ENCODE measurements at regions of chr1 and their contacts with region 1.

Region 1: GRCh38 chr1:17661546-17662157 is 93.5 kb upstream of the ACTL8 start:
- DNase-seq: peak; percentile 33
- ATAC-seq: peak; percentile 75
- H3K4me3 ChIP-seq: no peak overlapping the region
- H3K27ac ChIP-seq: no peak overlapping the region
- H3K4me1 ChIP-seq: no peaks in the 10 kb centered on the region
- H3K27me3 ChIP-seq: no peaks in the 10 kb centered on the region
- CTCF ChIP-seq: peak; percentile 91

Region 2: DNA sequence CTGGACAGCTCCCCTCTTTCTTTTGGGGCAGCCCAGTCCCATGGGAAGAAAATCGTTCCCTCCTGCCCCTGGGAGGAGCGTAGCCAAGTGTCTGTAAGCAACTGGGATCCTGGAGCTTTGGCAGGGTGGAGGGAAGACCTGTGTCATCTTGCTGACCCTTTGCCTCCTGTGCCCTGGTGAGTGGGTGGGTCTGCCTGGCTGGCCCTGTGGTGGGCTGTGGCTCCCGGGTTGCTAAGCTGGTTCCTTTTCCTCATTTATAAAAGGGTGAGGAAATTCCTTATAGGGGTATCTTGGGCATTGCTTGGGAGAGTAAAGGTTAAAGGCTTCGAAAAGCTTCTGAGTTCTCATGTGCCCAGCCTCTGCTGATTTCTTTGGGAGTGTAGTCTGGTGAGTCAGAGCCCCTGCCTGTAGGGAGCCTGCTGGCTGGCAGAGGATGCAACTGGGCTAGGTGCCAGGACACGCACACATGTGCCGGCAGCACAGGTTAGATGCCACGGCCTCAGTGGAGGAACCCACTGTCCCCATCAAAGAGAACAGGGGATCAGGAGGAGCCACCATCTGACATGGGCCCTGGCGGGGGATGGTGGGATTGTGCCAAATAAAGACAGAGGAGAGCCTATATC is 36.9 kb before region 1 on chr1:
- CTCF ChIA-PET with region 1: no interaction called
- POLR2A ChIA-PET with region 1: no interaction called
- in situ Hi-C with region 1: no loop called
- intact Hi-C with region 1: no loop called
- DNase-seq: no peak
- ATAC-seq: peak; percentile 41; the same call in 1 of the 2 replicates
- H3K4me3 ChIP-seq: no peak overlapping the region
- H3K27ac ChIP-seq: no peak overlapping the region
- H3K4me1 ChIP-seq: no peaks in the 10 kb centered on the region
- H3K27me3 ChIP-seq: no peaks in the 10 kb centered on the region
- CTCF ChIP-seq: no peak

Region 3: GRCh38 chr1:17696417-17697301 is 35.0 kb after region 1 on chr1:
- CTCF ChIA-PET with region 1: interaction called, 10 read pairs
- POLR2A ChIA-PET with region 1: no interaction called
- in situ Hi-C with region 1: no loop called
- intact Hi-C with region 1: loop called (anchors 5 kb)
- DNase-seq: peak; percentile 2
- ATAC-seq: peak; percentile 85
- H3K4me3 ChIP-seq: no peak overlapping the region
- H3K27ac ChIP-seq: no peak overlapping the region
- H3K4me1 ChIP-seq: no peaks in the 10 kb centered on the region; the same call in 1 of the 2 replicates
- H3K27me3 ChIP-seq: no peaks in the 10 kb centered on the region
- CTCF ChIP-seq: peak; percentile 76; the same call in 1 of the 2 replicates

Region 4: GRCh38 chr1:17742583-17742982 is 80.9 kb after region 1 on chr1:
- CTCF ChIA-PET with region 1: interaction called, 12 read pairs
- POLR2A ChIA-PET with region 1: no interaction called
- in situ Hi-C with region 1: no loop called
- intact Hi-C with region 1: no loop called
- DNase-seq: no peak
- ATAC-seq: no peak
- H3K4me3 ChIP-seq: no peak overlapping the region
- H3K27ac ChIP-seq: no peak overlapping the region
- H3K4me1 ChIP-seq: no peaks in the 10 kb centered on the region
- H3K27me3 ChIP-seq: peaks cover 11% of the 10 kb centered on the region
- CTCF ChIP-seq: no peak

Region 5: DNA sequence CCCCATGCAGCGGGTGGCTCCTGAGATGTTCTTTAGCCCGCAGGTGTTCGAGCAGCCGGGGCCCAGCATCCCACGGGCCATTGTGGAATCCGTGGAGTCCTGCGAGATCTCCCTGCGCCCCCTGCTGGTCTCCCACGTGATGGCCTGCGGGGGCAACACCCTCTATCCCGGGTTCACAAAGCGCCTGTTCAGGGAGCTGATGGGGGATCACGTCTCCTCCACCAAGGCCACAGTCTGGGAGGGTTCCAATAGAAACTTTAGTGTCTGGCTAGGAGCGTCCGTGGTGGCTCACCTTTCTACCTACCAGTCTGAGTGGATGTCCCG is 164.5 kb after region 1 on chr1:
- CTCF ChIA-PET with region 1: interaction called, 4 read pairs
- POLR2A ChIA-PET with region 1: no interaction called
- in situ Hi-C with region 1: no loop called
- intact Hi-C with region 1: loop called (anchors 10 kb)
- DNase-seq: no peak
- ATAC-seq: peak; percentile 74
- H3K4me3 ChIP-seq: no peak overlapping the region
- H3K27ac ChIP-seq: no peak overlapping the region
- H3K4me1 ChIP-seq: no peaks in the 10 kb centered on the region
- H3K27me3 ChIP-seq: peaks cover 3% of the 10 kb centered on the region
- CTCF ChIP-seq: peak; percentile 83

Region 6: GRCh38 chr1:17909634-17910033 is 248.0 kb after region 1 on chr1:
- CTCF ChIA-PET with region 1: interaction called, 5 read pairs
- POLR2A ChIA-PET with region 1: no interaction called
- in situ Hi-C with region 1: no loop called
- intact Hi-C with region 1: loop called (anchors 5 kb)
- DNase-seq: no peak
- ATAC-seq: no peak
- H3K4me3 ChIP-seq: no peak overlapping the region
- H3K27ac ChIP-seq: no peak overlapping the region
- H3K4me1 ChIP-seq: no peaks in the 10 kb centered on the region
- H3K27me3 ChIP-seq: peaks cover 36% of the 10 kb centered on the region
- CTCF ChIP-seq: peak; percentile 45; the same call in 1 of the 2 replicates

Region 7: DNA sequence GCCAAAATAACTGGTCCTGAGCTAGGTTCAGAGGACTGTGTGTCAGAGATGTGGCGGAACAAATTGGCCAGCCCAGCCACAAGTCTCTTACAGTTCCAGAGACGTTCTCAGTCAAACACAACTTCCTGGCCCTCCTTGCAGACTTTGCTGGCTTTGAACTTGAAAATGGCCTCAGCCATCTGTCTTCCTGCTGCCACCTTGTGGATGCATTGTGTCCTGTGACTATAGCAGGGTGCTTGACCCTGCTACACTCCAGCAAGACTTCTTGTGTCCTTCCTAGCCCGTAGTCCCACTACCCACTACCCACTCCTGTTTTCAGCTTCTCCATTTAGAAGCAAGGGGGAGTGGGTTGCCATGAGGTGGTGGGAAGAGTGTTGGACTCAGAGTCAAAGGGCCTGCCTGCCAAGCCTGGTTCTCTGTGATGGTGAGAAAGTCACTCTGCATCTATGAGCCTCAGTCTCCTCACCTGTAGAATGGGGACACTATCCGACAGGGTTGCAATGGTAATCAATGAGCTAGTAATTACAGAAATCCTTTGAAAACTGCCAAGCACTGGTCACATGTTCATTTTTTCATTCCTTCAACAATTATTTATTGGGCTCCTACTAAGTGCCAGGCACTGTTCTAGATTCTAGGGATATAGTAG is 555.9 kb after region 1 on chr1:
- CTCF ChIA-PET with region 1: no interaction called
- POLR2A ChIA-PET with region 1: no interaction called
- in situ Hi-C with region 1: no loop called
- intact Hi-C with region 1: loop called (anchors 5 kb)
- DNase-seq: no peak
- ATAC-seq: peak; percentile 73; the same call in 1 of the 2 replicates
- H3K4me3 ChIP-seq: no peak overlapping the region
- H3K27ac ChIP-seq: no peak overlapping the region
- H3K4me1 ChIP-seq: no peaks in the 10 kb centered on the region
- H3K27me3 ChIP-seq: peaks cover 21% of the 10 kb centered on the region
- CTCF ChIP-seq: peak; percentile 70

Region 8: DNA sequence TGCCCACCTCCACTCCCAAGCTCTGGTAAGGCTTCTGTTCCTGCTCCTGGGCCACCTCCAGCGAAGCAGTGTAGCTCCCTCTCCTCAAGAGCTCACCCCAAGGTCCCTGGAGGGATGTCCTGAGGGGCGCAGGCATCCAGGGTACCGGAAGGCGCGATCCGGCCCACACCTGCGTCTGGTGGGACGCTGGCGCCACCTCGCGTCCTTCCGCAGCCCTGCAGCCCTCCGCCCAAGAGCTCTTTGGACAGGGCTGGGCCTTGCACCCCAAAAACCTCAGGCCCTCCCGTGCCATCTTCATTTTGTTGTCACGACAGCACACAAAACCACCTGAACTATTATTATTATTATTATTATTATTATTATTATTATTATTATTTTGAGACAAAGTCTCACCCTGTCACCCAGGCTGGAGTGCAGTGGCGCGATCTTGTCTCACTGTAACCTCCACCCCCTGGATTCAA is 919.8 kb after region 1 on chr1:
- CTCF ChIA-PET with region 1: interaction called, 4 read pairs
- POLR2A ChIA-PET with region 1: no interaction called
- in situ Hi-C with region 1: no loop called
- intact Hi-C with region 1: loop called (anchors 5 kb)
- DNase-seq: no peak
- ATAC-seq: peak; percentile 68
- H3K4me3 ChIP-seq: no peak overlapping the region
- H3K27ac ChIP-seq: no peak overlapping the region
- H3K4me1 ChIP-seq: no peaks in the 10 kb centered on the region; the same call in 1 of the 2 replicates
- H3K27me3 ChIP-seq: no peaks in the 10 kb centered on the region; the same call in 1 of the 2 replicates
- CTCF ChIP-seq: peak; percentile 94